Ovary (tissue), 10 donors: ENCODE measurements at regions of chr2 and their contacts with region 1.

Region 1: DNA sequence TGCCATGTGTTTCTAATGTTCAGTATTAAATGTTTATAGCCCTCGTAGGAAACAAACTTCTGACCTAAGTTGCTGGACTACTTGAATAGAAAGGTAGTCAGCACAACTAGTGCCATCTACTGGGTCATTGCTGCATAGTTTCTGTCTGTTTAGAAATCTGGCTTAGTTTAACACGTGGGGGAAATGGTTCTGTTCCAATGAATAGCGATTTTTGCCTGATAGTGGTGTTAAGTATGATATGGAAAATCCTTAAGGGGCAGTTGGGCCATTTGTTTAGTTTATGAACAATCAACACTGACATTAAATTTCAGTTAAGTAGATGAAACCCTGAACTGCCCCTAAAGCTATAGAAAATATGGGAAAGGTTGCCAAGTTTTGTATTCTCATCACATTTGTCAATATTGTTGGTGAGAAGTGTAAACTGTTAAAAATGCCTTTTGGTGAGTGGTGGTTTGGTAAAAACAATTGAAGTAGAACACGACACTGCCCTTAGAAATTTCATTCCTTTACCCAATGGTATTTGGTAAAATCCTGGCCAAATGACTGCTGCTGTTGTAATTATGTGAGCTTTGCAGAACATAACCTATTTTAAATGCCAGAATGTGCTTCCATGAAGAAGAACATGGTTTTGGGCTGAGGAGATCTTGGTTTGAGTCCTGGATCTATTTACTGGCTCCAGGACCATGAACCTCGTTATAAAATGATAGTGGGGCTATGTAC is 13.2 kb downstream of the NABP1 start:
- DNase-seq: peak in 1 of 5 donors; percentile 42
- H3K4me3 ChIP-seq: no peak overlapping the region
- H3K27ac ChIP-seq: no peak overlapping the region
- H3K4me1 ChIP-seq: no peaks in the 10 kb centered on the region
- H3K27me3 ChIP-seq: no peaks in the 10 kb centered on the region
- CTCF ChIP-seq: peak; percentile 25 to 41 (median 32)
- EP300 ChIP-seq: no peak
- POLR2A ChIP-seq: no peak

Region 2: DNA sequence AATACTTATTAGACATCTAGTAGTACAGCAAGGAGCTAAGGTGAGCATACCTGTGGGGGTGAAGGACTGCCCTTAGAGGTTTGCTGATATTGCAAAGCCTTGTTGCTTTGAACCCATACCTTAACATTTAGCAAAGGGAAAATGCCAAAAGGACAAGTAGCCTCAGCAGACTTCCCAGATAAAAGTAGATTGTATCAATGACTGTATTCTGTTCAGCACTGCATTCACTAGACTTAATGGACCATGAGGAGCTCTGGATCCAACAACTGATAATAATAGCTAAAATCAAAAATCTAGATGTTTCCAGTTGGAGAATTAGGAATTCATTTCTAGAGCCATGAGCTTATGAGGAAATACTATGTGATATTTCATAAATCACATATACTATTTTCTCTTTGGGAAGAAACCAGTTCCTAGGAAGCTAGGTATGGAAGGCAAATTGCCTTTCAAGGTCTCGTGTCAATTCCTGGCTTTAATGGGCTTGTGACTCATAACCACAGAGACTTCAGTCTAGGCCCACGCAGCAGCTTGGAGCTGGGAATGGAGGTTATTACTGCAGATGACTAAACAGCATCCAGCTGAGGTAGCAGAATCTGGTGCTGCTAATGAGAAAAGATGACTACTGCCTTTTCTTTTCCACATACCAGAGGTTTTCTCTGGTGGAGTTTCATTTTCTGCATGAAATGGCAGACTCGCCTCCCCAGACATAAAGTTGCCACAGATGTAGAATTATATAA is 204.4 kb before region 1 on chr2:
- intact Hi-C with region 1: no loop called
- DNase-seq: no peak
- H3K4me3 ChIP-seq: no peak overlapping the region
- H3K27ac ChIP-seq: no peak overlapping the region
- H3K4me1 ChIP-seq: no peaks in the 10 kb centered on the region
- H3K27me3 ChIP-seq: no peaks in the 10 kb centered on the region
- CTCF ChIP-seq: no peak
- EP300 ChIP-seq: no peak
- POLR2A ChIP-seq: no peak

Region 3: DNA sequence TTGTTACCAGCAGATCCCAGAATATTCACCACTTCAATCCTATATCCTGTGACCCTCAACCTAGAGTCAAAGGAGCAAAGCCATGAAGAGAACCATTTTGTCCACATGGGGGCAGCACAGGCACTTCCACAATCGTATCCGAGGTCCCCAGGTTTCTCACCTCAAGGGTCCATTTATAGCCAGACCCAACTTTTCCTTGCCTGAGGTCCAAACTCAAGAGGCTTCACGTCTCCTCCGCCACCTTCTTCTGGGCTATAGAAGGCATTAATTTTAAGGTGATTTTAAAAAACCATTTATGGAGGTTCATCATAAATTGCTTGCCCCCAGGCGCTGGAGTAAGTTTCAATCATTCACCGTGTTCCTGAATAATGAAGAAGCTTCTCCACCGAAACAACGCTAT is 124.8 kb before region 1 on chr2:
- intact Hi-C with region 1: loop called in 1 of 4 experiments (anchors 10 kb)
- DNase-seq: peak in 2 of 5 donors; percentile 21 to 32
- H3K4me3 ChIP-seq: no peak overlapping the region
- H3K27ac ChIP-seq: no peak overlapping the region
- H3K4me1 ChIP-seq: no peaks in the 10 kb centered on the region
- H3K27me3 ChIP-seq: no peaks in the 10 kb centered on the region
- CTCF ChIP-seq: no peak
- EP300 ChIP-seq: no peak
- POLR2A ChIP-seq: no peak

Region 4: DNA sequence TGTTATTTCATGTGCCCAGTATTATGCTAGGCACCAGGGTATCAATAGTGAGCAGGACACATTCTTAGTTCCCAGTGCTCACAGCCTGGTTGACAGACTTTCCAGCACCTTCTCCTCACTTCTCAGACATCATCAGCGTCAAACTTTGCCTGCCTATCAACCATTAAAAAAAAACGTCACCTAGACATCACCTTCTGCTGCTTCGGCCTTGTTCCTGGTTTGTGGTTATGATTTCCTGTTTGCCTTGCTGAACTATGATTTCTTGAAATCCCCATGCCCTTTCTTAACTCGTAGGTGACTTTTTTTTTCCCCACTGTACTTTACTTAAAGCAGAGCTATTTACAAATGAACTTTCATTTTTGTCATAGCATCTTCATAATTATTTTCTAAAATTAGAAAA is 73.6 kb before region 1 on chr2:
- intact Hi-C with region 1: no loop called
- DNase-seq: no peak
- H3K4me3 ChIP-seq: no peak overlapping the region
- H3K27ac ChIP-seq: no peak overlapping the region
- H3K4me1 ChIP-seq: no peaks in the 10 kb centered on the region
- H3K27me3 ChIP-seq: no peaks in the 10 kb centered on the region
- CTCF ChIP-seq: no peak
- EP300 ChIP-seq: no peak
- POLR2A ChIP-seq: no peak